ENCODE measurements at regions of chr15 and their contacts with region 1.

Region 1: DNA sequence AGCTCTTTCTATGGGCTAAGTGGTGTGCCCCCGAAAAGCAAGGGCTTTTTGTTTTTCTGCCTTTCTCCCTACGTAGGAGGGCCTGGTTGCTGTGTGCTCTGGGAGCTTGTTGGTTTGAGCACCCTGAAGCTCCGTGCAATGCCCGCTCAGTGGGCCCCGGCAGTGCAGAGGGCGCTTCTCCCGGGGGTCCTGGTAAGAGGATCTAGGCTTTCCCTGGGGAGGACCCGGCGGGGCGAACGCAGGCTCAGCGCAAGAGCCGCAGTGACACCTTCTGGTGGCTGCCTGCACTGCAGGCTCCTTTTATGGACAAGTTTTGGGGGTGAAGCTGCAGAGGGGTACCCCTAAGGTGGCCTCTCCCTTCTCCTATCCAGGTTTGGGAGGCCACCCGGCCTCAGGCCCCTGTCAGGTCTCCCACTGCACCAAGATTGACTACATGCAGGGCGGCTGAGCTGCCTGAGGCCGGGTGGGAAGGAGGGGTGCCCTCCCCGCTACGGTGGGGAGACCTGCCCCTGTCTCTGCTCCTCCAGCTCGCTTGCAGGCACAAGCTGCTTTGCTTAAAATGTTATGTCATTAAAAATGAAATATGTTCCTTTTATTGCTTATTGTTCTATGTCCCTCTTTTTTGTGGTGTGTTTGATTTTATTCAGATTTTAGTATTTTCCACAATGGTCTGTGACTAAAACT is 387.9 kb downstream of the GABRG3 start:
- DNase-seq: peak; percentile 64
- H3K4me3 ChIP-seq: peak overlapping the region in 1 of 4 donors; percentile 25
- H3K27ac ChIP-seq: no peak overlapping the region
- H3K4me1 ChIP-seq: peaks cover 0 to 7% (median 5%) of the 10 kb centered on the region in 4 donors
- H3K27me3 ChIP-seq: peaks cover 0 to 11% (median 0%) of the 10 kb centered on the region in 4 donors
- CTCF ChIP-seq: peak; percentile 50 to 74 (median 72)
- EP300 ChIP-seq: no peak
- POLR2A ChIP-seq: no peak

Region 2: GRCh38 chr15:26891448-26892181 is 467.3 kb before region 1 on chr15:
- intact Hi-C with region 1: loop called (anchors 5 kb)
- DNase-seq: peak; percentile 91
- H3K4me3 ChIP-seq: peak overlapping the region; percentile 9 to 46 (median 24)
- H3K27ac ChIP-seq: no peak overlapping the region
- H3K4me1 ChIP-seq: peaks cover 0 to 37% (median 20%) of the 10 kb centered on the region in 4 donors
- H3K27me3 ChIP-seq: peaks cover 0 to 9% (median 0%) of the 10 kb centered on the region in 4 donors
- CTCF ChIP-seq: peak; percentile 48 to 66 (median 61)
- EP300 ChIP-seq: no peak
- POLR2A ChIP-seq: no peak

Region 3: GRCh38 chr15:27059610-27060202 is 299.2 kb before region 1 on chr15:
- intact Hi-C with region 1: loop called (anchors 10 kb)
- DNase-seq: no peak
- H3K4me3 ChIP-seq: no peak overlapping the region
- H3K27ac ChIP-seq: no peak overlapping the region
- H3K4me1 ChIP-seq: no peaks in the 10 kb centered on the region
- H3K27me3 ChIP-seq: no peaks in the 10 kb centered on the region
- CTCF ChIP-seq: peak; percentile 47 to 58 (median 56)
- EP300 ChIP-seq: no peak
- POLR2A ChIP-seq: no peak

Measured in esophagus muscularis mucosa (tissue), 4 donors.